CD8-positive, alpha-beta T cell (primary cell): ENCODE measurements at regions of chr9 and their contacts with region 1.

Region 1: GRCh38 chr9:136363606-136364370 is at the start of gene DNLZ:
- DNase-seq: peak; percentile 67 to 94 (median 86)
- ATAC-seq: peak; percentile 77
- H3K4me3 ChIP-seq: peak within 1 kb of the TSS; percentile 51 to 72
- H3K4me3 Mint-ChIP-seq: peak within 1 kb of the TSS; percentile 83
- H3K27ac ChIP-seq: peak within 1 kb of the TSS; percentile 53 to 70
- H3K27ac Mint-ChIP-seq: peak within 1 kb of the TSS; percentile 73
- H3K4me1 ChIP-seq: peaks cover 6% of the 10 kb centered on the region
- H3K4me1 Mint-ChIP-seq: peaks cover 9% of the 10 kb centered on the region
- H3K27me3 ChIP-seq: no peaks in the 10 kb centered on the region
- H3K27me3 Mint-ChIP-seq: no peaks in the 10 kb centered on the region
- CTCF ChIP-seq: peak; percentile 97
- total RNA-seq, gene DNLZ: 21.0 to 22.1 TPM

Region 2: GRCh38 chr9:136245219-136246150 is 118.3 kb before region 1 on chr9 and contains the start of gene QSOX2:
- CTCF ChIA-PET with region 1: no interaction called
- POLR2A ChIA-PET with region 1: no interaction called
- intact Hi-C with region 1: loop called in 1 of 2 experiments (anchors 1 kb)
- DNase-seq: peak; percentile 69 to 93 (median 82)
- ATAC-seq: peak; percentile 84
- H3K4me3 ChIP-seq: peak within 1 kb of the TSS; percentile 40 to 60
- H3K4me3 Mint-ChIP-seq: peak within 1 kb of the TSS; percentile 91
- H3K27ac ChIP-seq: peak within 1 kb of the TSS; percentile 33 to 37
- H3K27ac Mint-ChIP-seq: peak within 1 kb of the TSS; percentile 85
- H3K4me1 ChIP-seq: peaks cover 35% of the 10 kb centered on the region
- H3K4me1 Mint-ChIP-seq: peaks cover 32% of the 10 kb centered on the region
- H3K27me3 ChIP-seq: no peaks in the 10 kb centered on the region
- H3K27me3 Mint-ChIP-seq: no peaks in the 10 kb centered on the region
- CTCF ChIP-seq: no peak
- total RNA-seq, gene QSOX2: 13.8 to 14.2 TPM

Region 3: DNA sequence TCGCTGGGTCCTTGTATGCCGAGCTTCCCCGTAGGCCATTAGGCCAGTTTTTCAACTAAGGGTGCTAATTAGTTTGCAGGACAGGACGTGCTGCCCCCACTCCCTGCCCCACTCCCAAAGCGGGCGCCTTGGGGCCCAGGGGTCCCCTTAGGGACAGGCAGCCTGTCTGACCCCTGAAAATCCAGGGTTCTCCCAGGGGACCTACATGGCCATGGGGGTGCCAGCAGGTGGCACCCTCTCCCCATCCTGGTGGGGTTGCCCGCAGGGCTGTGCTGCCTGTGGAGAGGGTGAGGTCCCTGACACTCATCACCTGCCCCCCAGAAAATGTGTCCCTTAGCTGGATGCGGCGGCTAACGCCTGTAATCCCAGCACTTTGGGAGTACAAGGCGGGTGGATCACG is 51.4 kb before region 1 on chr9:
- CTCF ChIA-PET with region 1: interaction called, 3 read pairs
- POLR2A ChIA-PET with region 1: no interaction called
- intact Hi-C with region 1: loop called in 1 of 2 experiments (anchors 1 kb)
- DNase-seq: peak in 8 of 9 experiments; percentile 7 to 65 (median 40)
- ATAC-seq: peak; percentile 50
- H3K4me3 ChIP-seq: no peak overlapping the region
- H3K4me3 Mint-ChIP-seq: no peak overlapping the region
- H3K27ac ChIP-seq: no peak overlapping the region
- H3K27ac Mint-ChIP-seq: no peak overlapping the region
- H3K4me1 ChIP-seq: no peaks in the 10 kb centered on the region
- H3K4me1 Mint-ChIP-seq: peaks cover 4% of the 10 kb centered on the region
- H3K27me3 ChIP-seq: peaks cover 7 to 31% of the 10 kb centered on the region in 2 experiments
- H3K27me3 Mint-ChIP-seq: no peaks in the 10 kb centered on the region
- CTCF ChIP-seq: peak; percentile 40

Region 4: DNA sequence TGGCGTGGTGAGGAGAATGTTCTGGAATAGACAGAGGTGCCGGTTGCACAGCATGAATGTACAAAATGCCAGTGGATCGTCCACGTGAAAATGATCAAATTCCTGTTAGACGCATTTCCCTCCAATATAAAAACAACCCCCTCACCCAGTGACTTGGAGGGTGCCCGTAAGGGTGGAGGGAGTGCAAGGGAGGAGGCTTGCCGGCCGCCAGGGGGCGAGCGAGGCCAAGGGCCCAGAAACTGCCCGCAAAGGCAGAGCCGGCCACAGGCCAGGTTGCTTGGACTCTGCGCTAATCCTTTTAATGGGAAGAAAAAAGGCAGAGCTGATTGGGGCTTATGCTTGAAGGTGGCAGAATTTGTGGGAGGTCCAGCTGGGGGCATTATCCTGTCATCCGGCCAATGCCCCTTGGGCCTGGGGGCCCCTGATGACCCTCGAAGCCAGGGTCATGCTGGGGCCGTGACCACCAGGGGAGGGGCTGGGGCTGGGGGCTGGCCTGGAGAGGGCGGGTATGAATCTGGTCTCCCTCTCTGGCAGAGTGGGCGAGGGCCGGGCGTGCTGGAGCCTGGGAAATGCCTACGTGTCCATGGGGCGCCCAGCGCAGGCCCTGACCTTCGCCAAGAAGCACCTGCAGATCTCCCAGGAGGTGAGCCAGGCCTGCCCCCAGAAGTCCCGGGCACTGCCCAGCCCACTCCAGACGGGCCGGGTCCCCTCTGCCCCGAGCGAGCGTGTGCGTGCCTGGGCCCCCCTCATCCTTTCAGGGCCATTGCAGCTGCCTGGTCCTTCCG is 24.4 kb before region 1 on chr9:
- CTCF ChIA-PET with region 1: no interaction called
- POLR2A ChIA-PET with region 1: no interaction called
- intact Hi-C with region 1: loop called in 1 of 2 experiments (anchors 1 kb)
- DNase-seq: peak in 5 of 9 experiments; percentile 28 to 61 (median 49)
- ATAC-seq: no peak
- H3K4me3 ChIP-seq: no peak overlapping the region
- H3K4me3 Mint-ChIP-seq: no peak overlapping the region
- H3K27ac ChIP-seq: no peak overlapping the region
- H3K27ac Mint-ChIP-seq: no peak overlapping the region
- H3K4me1 ChIP-seq: no peaks in the 10 kb centered on the region
- H3K4me1 Mint-ChIP-seq: no peaks in the 10 kb centered on the region
- H3K27me3 ChIP-seq: no peaks in the 10 kb centered on the region
- H3K27me3 Mint-ChIP-seq: no peaks in the 10 kb centered on the region
- CTCF ChIP-seq: peak; percentile 33

Region 5: GRCh38 chr9:136410500-136411287 is 46.9 kb after region 1 on chr9 and contains the starts of genes ENTR1 and PMPCA:
- CTCF ChIA-PET with region 1: no interaction called
- POLR2A ChIA-PET with region 1: interaction called, 5 read pairs
- intact Hi-C with region 1: loop called in 1 of 2 experiments (anchors 1 kb)
- DNase-seq: peak; percentile 88 to 97 (median 96)
- ATAC-seq: peak; percentile 85
- H3K4me3 ChIP-seq: peak within 1 kb of the TSS; percentile 79 to 99
- H3K4me3 Mint-ChIP-seq: peak within 1 kb of the TSS; percentile 89
- H3K27ac ChIP-seq: peak within 1 kb of the TSS; percentile 88 to 96
- H3K27ac Mint-ChIP-seq: peak within 1 kb of the TSS; percentile 90
- H3K4me1 ChIP-seq: peaks cover 35% of the 10 kb centered on the region
- H3K4me1 Mint-ChIP-seq: peaks cover 40% of the 10 kb centered on the region
- H3K27me3 ChIP-seq: no peaks in the 10 kb centered on the region
- H3K27me3 Mint-ChIP-seq: no peaks in the 10 kb centered on the region
- CTCF ChIP-seq: no peak
- total RNA-seq, gene ENTR1: 33.0 to 34.4 TPM
- total RNA-seq, gene PMPCA: 107 to 111 TPM

Region 6: DNA sequence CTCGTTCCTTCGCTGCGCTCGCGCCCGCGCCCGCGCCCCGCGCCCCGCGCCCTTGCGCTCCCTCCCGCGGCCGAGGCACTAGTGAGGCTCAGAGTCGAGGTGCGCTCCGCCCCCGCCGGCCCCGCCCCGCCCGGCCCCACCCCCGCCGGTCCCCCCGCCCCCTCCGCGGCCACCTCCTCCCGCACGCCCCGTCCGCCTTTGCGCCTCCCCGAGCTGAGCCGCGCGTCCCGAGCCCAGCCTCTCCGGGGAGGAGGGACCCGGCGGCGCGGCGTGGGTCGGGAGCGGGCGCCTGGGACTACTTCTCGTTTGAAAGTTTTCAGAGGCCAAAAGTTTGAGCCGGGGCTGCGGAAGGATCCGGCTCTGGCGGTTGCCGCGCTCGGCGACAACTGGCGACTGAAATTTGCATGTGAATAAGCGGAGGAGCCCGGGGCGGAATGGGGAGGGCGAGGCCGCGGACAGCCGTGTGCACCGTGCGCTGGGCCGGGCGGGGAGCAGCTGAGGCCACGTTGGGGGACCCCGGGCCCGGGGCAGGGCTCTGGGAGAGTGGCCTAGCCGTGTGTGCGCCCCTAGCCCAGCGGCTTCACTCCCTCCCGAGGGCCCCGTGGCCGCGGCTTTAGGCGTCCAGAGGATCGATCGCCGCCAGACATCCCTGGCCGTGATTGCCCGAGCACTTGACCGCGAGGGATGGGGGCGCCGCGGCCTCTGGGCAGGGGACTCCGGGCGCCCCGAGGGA is 182.3 kb after region 1 on chr9 and contains the start of gene NOTCH1:
- CTCF ChIA-PET with region 1: no interaction called
- POLR2A ChIA-PET with region 1: no interaction called
- intact Hi-C with region 1: loop called in 1 of 2 experiments (anchors 1 kb)
- DNase-seq: peak; percentile 75 to 91 (median 83)
- ATAC-seq: peak; percentile 78
- H3K4me3 ChIP-seq: peak within 1 kb of the TSS; percentile 82 to 90
- H3K4me3 Mint-ChIP-seq: peak within 1 kb of the TSS; percentile 85
- H3K27ac ChIP-seq: peak within 1 kb of the TSS; percentile 50 to 55
- H3K27ac Mint-ChIP-seq: peak within 1 kb of the TSS; percentile 85
- H3K4me1 ChIP-seq: peaks cover 31% of the 10 kb centered on the region
- H3K4me1 Mint-ChIP-seq: peaks cover 27% of the 10 kb centered on the region
- H3K27me3 ChIP-seq: no peaks in the 10 kb centered on the region
- H3K27me3 Mint-ChIP-seq: no peaks in the 10 kb centered on the region
- CTCF ChIP-seq: no peak
- total RNA-seq, gene NOTCH1: 29.0 to 30.0 TPM